ENCODE measurements at regions of chr3 and their contacts with region 1.

Region 1: DNA sequence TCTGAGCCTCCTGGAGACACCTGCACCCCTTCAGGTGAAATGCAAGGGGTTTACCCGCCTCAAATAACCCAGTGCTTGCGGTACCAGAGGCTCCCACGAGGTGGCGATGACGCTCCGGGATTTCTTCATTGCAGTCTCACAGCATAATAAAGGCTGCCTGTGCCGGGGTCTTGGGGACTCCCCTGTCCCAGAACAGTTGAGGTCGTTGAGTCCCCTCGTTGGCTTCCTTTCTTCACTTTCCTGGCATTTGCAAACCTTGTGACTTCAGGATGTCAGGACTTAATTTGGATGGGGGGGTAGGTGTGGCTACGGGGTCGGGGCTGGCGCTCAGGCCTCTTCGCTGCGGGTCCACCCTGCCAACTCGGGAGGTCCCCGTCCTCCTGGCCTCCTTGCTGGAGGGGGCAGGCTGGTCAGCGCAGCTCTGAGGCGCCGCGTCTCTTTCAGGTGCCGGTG is 1.3 kb downstream of the GNAT1 start:
- DNase-seq: peak; percentile 85

Region 2: DNA sequence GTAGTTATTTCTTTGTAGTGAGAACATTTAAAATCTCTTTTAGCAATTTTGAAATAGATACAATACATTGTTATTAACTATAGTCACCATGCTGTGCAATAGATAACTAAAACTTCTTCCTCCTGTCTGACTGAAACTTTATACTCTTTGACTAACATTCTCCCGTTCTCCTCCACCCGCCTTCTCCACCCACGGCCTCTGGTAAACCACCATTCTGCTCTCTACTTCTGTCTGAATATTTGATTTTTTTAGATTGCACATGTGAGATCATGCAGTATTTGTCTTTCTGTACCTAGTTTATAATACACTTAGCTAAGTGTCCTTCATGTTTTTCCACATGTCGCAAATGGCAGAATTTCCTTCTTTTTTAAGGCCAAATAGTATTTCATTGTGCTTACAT is 176.8 kb before region 1 on chr3:
- intact Hi-C with region 1: no loop called
- DNase-seq: no peak

Region 3: GRCh38 chr3:50121416-50122032 is 71.2 kb before region 1 on chr3:
- intact Hi-C with region 1: loop called (anchors 1 kb)
- DNase-seq: no peak

Region 4: GRCh38 chr3:50154840-50155474 is 37.8 kb before region 1 on chr3 and contains the start of gene SEMA3F:
- intact Hi-C with region 1: loop called (anchors 1 kb)
- DNase-seq: peak; percentile 79
- total RNA-seq, gene SEMA3F: 10.0 TPM

Region 5: DNA sequence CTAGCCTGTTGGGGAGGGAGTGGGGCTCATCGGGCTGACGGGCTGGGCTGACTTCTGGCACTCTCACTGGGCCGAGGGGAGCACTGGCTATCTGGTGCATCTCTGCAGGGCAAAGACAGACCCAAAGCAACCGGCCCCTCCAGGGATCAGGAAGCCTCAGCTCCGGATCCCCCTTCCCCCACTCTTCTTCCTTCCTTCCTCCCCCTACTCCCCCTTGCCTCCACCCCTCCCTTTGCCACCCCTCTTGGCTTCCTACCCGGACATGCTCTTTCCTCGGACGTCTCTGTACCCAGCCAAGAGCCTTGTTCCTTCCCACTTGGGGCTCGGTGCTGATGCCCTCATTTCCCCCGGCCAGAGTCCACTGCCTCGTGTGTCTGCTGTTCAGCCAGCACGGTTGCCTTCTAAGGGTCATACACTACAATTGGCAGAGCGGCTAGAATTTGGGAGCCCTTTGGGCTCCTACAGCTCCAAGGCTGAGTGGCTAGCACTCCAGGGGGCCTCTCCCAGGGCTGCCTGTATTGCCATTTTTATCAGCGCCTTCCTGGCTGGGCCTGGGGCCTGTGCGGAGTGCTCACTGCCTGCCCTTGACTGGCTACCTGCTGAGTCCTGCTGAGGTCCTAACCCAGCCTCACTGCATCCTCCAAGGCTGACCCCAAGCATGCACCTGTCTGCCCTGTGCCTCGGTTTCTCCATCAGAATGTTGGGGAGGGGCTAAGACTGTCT is 26.6 kb before region 1 on chr3:
- intact Hi-C with region 1: loop called (anchors 2 kb)
- DNase-seq: no peak

Region 6: DNA sequence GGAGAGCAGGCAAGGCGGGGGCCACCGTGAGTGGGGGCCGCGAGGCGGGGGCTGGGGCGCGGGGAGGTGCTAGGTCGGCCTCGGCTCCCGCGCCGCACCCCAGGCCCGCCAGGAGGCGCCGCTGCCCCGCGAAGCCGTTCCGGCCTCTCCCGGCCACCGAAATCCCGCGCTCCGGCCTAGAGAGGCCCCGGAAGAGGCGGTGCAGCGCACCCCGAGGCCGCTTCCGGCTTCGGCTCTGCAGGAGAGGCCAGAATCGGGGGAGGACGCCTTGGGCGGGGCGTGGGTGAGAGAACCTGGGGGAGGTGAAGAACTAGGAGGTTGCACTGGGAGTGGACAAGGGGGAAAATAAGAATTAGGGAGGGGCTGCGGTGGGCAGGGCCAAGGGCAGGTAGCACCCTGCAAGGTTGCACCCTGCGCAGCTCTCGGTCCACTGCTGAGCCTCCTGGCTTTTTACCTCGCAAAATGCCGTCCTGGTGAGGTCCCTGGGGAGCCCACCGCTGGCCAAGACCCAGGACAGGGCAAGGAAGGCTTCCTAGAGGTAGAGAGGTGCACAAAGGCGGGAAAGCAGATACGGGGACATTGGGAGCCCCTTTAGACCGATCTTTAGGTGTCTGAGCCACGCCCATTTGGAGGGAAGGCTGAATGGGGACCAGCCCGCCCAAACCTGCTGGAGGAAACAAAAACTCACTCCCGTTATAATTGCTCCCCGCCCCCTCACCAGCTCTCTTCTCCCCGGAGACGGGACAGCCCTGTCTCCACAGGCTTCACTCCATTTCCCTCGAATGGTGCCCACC is 34.9 kb after region 1 on chr3:
- intact Hi-C with region 1: loop called (anchors 1 kb)
- DNase-seq: peak; percentile 96

Region 7: GRCh38 chr3:50237754-50238548 is 45.2 kb after region 1 on chr3:
- intact Hi-C with region 1: no loop called
- DNase-seq: peak; percentile 97

Region 8: GRCh38 chr3:50272911-50273693 is 80.4 kb after region 1 on chr3:
- intact Hi-C with region 1: loop called (anchors 2 kb)
- DNase-seq: peak; percentile 96

Region 9: DNA sequence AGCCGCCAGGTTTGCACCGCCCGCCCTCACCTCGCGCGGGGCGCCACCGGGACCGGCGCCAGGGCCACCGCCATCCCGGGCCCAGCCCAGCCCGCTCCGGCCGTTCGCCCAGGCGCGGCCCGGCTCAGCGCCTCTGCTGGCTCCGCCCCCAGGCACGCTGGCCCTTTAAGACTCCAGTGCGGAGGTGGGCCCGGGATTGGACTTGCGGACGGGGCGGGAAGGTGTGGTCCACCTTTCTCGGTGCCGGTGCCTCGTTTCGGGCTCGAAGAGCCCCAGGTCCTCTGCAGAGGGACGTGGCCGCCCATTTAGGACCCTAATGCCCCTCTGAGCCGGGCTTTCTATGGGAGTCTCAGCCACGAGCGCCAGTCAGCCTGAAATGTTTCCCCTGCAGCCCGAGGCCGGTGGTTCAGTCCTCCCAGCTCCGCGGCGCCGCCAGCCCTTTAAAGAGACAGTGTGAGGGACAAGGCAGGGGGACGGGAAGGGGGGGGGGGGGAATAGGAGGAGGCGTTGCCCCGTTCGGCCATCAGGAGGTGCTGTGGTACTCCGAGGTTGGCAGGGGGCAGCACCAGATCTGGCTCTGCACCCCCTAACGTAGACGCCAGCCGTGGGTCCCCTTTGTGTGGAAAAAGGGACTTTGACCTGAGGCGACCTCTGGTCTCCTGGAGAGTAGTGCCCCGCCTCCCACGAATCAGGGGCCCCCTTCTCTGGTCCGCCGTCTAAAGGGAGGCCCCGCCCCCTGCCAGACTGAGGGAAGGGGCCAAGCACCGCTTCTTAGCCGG is 128.8 kb after region 1 on chr3:
- intact Hi-C with region 1: loop called (anchors 5 kb)
- DNase-seq: peak; percentile 94

Measured in cardiac septum (tissue), 1 donor.